MCF 10A (cell line): ENCODE measurements at regions of chr11 and their contacts with region 1.

Region 1: GRCh38 chr11:65497141-65498041 is 1.5 kb upstream of the MALAT1 start:
- DNase-seq: peak; percentile 98
- H3K4me3 Mint-ChIP-seq: no peak overlapping the region
- H3K27ac Mint-ChIP-seq: no peak overlapping the region
- H3K4me1 Mint-ChIP-seq: peaks cover 17% of the 10 kb centered on the region
- H3K27me3 Mint-ChIP-seq: no peaks in the 10 kb centered on the region
- CTCF ChIP-seq: no peak

Region 2: DNA sequence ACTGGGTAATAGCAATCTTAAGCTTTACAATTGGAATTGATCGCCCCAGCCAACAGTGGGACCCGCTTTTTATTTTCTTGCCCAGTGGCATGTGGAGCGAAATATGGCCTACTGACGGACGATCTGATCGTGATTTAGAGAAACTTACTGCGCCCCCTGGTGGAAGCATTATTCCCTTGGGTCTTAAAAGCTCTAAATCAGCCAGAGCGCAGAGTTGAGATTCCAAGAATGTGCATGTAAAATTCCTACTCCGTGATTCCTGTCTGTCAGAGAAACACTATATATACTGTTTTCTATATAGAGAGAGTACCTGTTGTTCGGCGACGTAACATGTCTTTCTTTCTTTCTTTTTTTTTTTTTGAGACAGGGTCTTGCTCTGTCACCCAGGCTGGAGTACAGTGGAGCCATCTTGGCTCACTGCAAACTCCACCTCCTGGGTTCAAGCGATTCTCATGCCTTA is 167.4 kb before region 1 on chr11:
- CTCF ChIA-PET with region 1: interaction called, 3 read pairs
- POLR2A ChIA-PET with region 1: interaction called, 26 read pairs
- intact Hi-C with region 1: no loop called
- DNase-seq: peak; percentile 94
- H3K4me3 Mint-ChIP-seq: no peak overlapping the region
- H3K27ac Mint-ChIP-seq: peak overlapping the region; percentile 75
- H3K4me1 Mint-ChIP-seq: peaks cover 14% of the 10 kb centered on the region
- H3K27me3 Mint-ChIP-seq: no peaks in the 10 kb centered on the region
- CTCF ChIP-seq: peak; percentile 76

Region 3: GRCh38 chr11:65429724-65430405 is 67.5 kb before region 1 on chr11:
- CTCF ChIA-PET with region 1: interaction called, 3 read pairs
- POLR2A ChIA-PET with region 1: interaction called, 2,994 read pairs
- intact Hi-C with region 1: no loop called
- DNase-seq: peak; percentile 83
- H3K4me3 Mint-ChIP-seq: peak overlapping the region; percentile 98
- H3K27ac Mint-ChIP-seq: peak overlapping the region; percentile 62
- H3K4me1 Mint-ChIP-seq: peaks cover 49% of the 10 kb centered on the region
- H3K27me3 Mint-ChIP-seq: no peaks in the 10 kb centered on the region
- CTCF ChIP-seq: no peak

Region 4: GRCh38 chr11:65448418-65449105 is 48.8 kb before region 1 on chr11:
- CTCF ChIA-PET with region 1: interaction called, 3 read pairs
- POLR2A ChIA-PET with region 1: interaction called, 213 read pairs
- intact Hi-C with region 1: loop called (anchors 2 kb)
- DNase-seq: peak; percentile 71
- H3K4me3 Mint-ChIP-seq: no peak overlapping the region
- H3K27ac Mint-ChIP-seq: peak overlapping the region; percentile 93
- H3K4me1 Mint-ChIP-seq: peaks cover 21% of the 10 kb centered on the region
- H3K27me3 Mint-ChIP-seq: no peaks in the 10 kb centered on the region
- CTCF ChIP-seq: no peak

Region 5: DNA sequence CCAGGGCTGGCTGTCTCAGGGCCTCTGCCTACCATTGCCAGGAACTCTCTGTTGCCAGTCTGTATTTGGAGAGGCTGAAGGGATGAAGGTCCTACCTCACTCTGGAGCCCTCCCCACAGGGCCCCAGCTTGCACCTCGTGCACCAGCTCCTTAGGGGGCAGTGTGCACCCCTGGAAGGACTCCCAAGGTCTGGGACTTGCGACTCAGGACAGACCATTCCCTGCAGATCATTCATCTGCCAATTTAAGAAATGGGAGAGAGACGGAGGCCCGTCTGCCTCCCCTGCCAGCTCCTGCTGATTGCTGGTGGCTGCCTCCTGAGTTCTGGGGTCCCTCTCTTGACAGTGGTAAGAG is 26.0 kb before region 1 on chr11:
- CTCF ChIA-PET with region 1: interaction called, 10 read pairs
- POLR2A ChIA-PET with region 1: interaction called, 2,284 read pairs
- intact Hi-C with region 1: loop called (anchors 1 kb)
- DNase-seq: peak; percentile 85
- H3K4me3 Mint-ChIP-seq: no peak overlapping the region
- H3K27ac Mint-ChIP-seq: peak overlapping the region; percentile 97
- H3K4me1 Mint-ChIP-seq: peaks cover 15% of the 10 kb centered on the region
- H3K27me3 Mint-ChIP-seq: no peaks in the 10 kb centered on the region
- CTCF ChIP-seq: peak; percentile 25

Region 6: DNA sequence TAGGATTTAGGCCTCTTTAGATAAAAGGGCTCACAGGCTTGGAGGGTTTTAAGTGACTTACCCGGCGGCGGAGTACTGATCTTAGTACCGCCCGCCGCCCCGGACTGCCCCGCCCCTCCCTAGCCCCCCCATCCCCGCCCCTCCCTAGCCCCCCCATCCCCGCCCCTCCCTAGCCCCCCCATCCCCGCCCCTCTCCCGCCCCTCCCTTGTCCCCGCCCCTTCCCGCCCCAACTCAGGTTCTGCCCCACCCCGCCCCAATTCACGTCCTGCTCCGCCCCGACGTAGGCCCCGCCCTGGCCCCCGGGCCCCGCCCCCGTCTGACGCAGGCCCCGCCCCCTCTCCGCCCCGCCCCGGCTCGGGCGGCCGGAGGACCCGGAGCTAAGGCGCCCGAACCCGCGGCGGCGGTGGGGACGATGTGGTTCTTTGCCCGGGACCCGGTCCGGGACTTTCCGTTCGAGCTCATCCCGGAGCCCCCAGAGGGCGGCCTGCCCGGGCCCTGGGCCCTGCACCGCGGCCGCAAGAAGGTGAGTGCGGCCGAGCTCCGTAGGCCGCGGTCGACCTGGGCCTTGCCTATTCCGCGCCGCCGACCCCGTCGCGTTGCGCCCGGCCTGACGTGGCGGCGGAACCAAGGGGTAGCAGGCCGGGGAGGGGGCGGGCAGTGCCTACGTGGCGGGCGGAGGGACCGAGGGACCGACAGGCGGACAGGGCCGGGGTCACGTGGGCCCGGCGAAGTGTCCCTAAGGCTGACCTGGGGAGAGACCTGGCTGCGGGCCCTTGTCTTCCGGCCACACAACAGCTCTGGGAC is 27.6 kb after region 1 on chr11 and contains the start of gene SCYL1:
- CTCF ChIA-PET with region 1: no interaction called
- POLR2A ChIA-PET with region 1: interaction called, 12 read pairs
- intact Hi-C with region 1: no loop called
- DNase-seq: peak; percentile 71
- H3K4me3 Mint-ChIP-seq: peak within 1 kb of the TSS; percentile 88
- H3K27ac Mint-ChIP-seq: peak within 1 kb of the TSS; percentile 90
- H3K4me1 Mint-ChIP-seq: peaks cover 10% of the 10 kb centered on the region
- H3K27me3 Mint-ChIP-seq: no peaks in the 10 kb centered on the region
- CTCF ChIP-seq: no peak
- total RNA-seq, gene SCYL1: 70.9 and 75.5 TPM in 2 replicates

Region 7: GRCh38 chr11:65615229-65615941 is 118.0 kb after region 1 on chr11 and contains the start of gene PCNX3:
- CTCF ChIA-PET with region 1: no interaction called
- POLR2A ChIA-PET with region 1: interaction called, 17 read pairs
- intact Hi-C with region 1: no loop called
- DNase-seq: peak; percentile 100
- H3K4me3 Mint-ChIP-seq: peak within 1 kb of the TSS; percentile 91
- H3K27ac Mint-ChIP-seq: peak within 1 kb of the TSS; percentile 96
- H3K4me1 Mint-ChIP-seq: peaks cover 26% of the 10 kb centered on the region
- H3K27me3 Mint-ChIP-seq: no peaks in the 10 kb centered on the region
- CTCF ChIP-seq: no peak
- total RNA-seq, gene PCNX3: 40.9 and 45.8 TPM in 2 replicates